GM18951 (cell line): ENCODE measurements at regions of chr3 and their contacts with region 1.

Region 1: GRCh38 chr3:177359593-177360357 is 162.5 kb upstream of the TBL1XR1 start:
- POLR2A ChIP-seq: peak; percentile 42

Region 2: DNA sequence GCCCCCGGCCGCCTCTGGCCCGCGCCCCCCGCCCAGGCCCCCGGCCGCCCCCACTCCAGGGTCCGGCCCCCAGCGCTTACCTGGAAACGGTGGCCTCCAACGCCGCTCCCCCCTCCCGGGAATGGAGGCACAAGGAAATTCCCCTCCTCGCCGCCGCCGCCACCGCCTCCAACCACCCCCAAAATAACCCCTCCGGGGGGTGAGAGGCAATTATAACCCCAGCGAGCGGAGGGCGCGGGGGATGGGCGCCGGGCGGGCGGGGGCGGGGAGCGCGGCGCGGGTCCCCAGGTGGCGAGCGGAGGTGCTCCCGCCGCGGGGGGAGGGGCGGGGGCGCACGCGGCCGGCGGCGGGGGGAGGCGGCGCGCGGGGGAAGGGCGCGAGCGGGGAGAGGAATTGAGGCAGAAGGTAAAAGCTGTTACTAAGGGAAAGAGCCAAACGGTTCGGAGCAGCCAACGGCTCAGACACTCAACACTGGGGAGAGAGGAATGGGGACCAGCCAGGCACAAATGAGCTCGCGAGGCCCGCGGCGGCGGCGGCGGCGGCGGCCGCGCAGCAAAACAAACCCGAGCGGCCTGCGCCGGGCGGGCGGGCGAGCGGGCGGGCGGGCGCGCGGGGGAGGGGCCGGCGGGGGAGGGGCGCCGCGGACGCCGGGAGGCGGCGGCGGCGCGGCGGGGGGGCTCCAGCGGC is 162.6 kb before region 1 on chr3 and contains the start of gene TBL1XR1:
- in situ Hi-C with region 1: loop called (anchors 10 kb)
- POLR2A ChIP-seq: peak; percentile 42

Region 3: DNA sequence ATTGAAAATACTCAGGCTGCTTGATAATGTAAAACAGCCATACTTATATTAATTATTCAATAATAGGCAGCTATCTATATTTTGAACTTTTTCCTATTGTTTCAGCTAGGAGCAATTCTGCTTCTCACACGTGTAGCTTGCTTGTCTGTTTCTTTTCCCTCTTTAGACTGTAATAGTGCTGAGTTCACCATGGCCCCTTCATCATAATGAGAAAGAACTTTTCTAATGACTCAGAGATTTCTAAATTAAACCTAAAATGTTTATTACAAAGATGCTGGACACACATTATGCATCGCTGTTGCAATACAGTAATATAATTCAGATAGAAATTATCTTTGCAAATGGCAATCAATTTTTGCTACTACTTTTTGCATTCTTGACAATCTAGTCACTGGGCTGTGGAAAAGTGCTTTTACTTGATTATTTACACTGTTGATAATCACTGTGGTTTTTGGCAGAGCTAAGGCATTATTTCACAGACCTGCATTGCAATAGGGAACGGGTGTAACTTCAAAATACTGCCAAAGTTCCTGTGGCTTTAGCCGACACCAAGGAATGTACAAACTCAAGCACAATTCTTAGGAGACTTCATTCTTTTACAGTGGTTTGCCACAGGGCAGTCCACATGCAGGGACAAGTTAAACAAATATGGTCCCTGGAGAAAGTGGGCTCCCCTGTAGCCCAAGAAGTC is 118.5 kb after region 1 on chr3:
- in situ Hi-C with region 1: no loop called
- POLR2A ChIP-seq: no peak

Region 4: DNA sequence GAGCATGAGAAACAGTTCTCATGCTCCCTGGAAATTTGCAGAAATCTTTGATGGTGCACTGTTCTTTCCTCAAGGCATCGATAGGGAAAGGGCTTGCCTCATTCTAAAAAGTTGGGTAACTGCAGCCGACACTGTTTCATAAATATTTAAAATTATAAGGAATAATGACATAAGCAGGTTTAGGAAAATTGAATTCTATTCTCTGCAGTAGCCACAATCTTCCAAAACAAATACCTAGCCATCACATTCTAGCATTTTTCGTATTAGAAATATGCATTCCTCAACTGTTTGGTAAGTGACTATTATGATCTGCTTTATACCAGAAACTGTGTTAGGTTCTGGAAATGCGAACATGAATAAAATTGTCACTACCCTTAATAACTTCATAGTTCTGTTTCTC is 677.0 kb after region 1 on chr3:
- in situ Hi-C with region 1: no loop called
- POLR2A ChIP-seq: no peak